GM18951 (cell line): ENCODE measurements at regions of chr3 and their contacts with region 1.

Region 1: DNA sequence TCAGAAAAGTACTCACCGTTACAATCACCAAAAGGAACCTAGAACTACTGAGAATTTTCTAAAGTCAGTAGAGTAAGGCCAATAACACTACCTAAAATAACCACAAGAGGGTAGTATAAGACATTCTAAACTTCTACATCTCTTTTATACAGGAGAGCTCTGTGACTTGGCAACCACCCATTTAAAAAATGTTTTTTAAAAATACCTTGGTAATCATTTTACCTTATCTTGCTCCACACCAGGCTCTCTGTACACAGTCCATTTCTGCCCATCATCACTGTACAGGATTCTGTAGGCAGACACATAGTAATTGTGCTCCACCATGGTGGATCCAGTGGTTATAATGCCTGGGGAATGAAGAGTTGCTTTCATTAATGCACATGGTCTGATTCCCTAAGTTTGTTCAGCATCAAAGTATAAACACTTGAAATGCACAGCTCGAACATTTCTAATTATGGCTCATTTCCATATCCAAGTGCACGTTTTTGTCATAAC is 54.5 kb downstream of the ST3GAL6 start:
- POLR2A ChIP-seq: no peak

Region 2: DNA sequence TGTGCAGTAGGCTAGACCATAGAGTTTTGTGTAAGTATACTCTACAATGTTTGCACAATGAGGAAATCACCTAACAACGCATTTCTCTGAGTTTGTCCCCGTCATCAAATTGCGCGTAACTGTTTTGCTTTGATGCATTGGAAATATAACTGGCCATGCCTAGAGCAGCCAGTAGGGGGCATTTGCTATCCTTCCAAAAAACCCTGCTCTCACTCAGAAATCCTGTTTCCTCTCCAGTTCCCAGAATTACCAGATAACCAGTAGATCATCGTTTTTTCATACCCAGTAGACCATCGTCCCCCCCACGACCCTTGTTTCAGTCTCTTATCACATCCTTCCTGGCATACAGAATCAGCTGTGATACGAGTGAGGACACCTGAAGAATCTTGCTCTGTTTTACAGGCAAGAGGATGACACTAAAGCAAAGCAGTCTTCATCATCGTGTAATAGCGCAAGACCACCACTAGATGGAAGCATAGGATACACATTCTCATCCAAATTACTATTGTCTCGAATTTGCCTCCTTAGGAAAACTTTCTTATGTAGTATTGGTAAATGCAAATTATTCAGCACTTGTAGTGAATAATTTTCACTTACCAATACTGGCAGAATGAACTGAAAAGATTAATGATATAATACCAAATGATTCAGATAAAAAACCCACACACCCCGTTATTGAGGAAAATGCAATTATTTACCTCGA is 778.1 kb before region 1 on chr3:
- in situ Hi-C with region 1: loop called (anchors 25 kb)
- POLR2A ChIP-seq: no peak

Region 3: GRCh38 chr3:98705706-98706105 is 111.9 kb before region 1 on chr3:
- in situ Hi-C with region 1: no loop called
- POLR2A ChIP-seq: no peak

Region 4: DNA sequence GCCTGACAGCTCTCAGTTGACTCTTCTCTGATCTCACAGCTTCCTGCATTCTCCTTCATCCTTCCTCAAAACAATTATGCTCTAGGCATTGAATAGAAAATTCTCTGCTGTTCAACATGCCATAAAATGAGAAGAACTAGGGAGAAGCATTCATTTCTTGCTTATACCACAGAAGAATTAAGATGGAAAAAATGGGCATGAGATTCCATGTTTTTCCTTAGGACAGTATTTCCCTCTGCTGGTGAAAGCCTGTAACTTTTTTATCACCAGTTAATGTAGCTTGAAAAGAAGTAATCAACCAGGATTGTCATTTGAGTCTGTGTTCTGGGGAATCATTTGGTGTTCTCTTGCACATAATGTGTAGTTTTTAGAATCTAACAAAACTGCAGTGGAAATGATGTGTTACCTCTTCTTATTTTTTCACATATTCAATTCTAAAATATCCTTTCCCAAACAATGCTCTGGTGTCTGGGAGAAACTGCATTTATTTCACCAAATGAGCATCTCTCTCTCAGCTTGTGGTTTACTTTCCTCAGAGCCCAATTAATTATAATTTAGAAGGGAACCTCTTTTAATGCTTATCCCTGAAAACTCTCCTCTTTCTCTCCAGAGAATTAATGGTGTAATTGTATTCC is 176.7 kb after region 1 on chr3:
- in situ Hi-C with region 1: loop called (anchors 10 kb)
- POLR2A ChIP-seq: no peak

Region 5: DNA sequence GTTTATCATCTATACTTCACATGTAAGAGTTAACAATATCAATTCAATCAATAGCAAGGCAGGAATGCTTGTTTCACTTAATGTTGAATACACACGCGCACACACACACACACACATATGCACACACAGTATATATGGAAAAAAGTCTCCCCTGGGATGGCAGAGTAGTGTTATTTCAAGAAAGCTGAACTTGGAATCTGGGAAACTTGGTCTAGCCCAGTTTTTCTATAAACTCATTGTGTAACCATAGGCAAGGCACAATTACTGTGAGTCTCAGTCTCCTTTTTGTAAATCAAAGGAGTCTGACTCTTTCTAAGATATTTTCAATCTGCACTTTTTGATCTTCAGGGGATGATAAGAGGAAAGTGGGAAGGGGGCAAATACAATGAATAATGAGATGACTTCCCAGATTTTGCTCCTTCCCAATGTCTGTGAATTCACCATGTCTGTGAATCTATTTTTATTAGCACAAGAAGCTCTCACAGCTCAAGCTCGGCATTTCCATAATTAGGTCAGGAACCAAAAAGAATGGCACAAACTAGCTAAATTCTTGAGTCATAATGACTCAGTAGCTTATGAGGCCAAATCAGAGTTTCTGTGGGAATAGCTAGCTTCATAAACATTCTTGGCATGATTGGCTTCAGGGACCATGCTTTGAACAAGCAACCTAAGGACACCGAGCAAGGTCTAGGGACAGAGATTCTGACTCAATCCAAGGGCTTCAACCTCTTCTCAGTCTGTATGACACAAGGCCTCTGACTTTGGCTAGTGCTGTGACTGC is 311.3 kb after region 1 on chr3:
- in situ Hi-C with region 1: no loop called
- POLR2A ChIP-seq: no peak

Region 6: DNA sequence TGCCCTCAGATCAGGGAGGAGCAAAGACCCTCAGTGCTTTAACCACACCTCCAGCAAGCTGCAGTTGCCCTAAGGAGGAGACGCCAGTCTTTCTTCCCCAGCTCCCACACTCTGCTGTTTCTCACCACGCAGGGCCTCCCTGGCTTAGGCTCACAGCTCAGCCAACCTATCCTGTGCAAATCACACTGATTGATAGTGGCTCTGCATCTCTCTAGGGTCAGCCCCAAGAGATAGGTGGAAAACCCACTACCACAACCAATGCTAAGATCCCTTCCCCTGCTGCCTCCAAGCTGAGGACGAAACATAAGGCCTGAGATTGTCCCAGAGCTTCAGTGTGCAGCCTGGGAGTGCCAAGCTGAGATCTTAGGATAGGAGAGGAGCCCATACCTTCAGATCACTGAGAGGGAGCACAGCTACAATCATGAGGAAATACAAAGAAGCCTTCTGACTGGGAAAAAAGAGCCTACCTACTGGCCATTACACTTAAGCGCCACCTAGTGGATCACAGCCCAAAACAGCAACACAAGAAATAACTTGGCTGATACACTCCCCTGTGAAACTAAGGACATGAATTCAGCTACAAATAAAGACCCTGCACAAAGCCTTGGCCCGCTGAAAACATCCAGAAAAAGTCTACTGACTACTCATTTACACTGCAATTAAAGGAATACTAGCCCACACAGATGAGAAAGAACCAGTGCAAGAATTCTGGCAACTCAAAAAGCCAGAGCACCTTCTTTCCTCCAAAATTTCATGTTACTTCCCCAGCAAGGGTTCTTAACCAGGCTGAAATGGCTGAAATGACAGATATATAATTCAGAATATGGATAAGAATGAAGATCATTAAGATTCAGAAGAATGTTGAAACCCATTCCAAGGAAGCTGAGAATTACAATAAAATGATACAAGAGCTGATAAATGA is 355.4 kb after region 1 on chr3:
- in situ Hi-C with region 1: loop called (anchors 10 kb)
- POLR2A ChIP-seq: no peak

Region 7: DNA sequence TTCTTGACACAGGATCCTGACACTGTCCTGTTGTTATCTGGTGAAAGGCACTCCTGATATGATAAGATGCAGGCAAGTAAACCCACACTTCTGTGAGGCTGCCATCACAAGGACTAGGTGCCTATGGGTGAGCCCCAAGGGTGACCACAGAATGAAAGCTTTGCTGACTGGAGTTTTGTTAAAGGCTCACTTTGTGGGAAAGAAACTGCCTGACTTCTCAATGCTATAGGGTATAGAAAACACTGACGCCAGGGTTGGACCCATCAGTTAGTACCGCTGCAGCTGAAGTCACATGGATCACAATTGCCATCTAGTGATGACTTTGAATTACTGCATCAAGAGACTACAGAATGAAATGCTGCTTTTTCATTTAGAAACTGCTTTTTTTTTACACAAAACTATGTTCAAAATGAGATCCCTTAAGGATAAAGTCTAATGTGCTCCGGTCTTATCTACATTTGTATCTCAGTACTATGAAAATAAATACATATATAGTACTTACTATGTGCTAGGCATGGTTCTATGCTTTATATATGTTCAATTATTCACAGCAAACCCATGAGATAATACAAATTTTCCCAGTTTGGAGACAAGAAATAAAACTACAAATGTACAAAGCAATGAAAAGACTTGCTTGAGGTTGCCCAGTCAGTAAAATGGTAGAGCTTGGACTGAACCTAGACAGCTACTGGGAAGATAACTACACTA is 935.8 kb after region 1 on chr3:
- in situ Hi-C with region 1: loop called (anchors 25 kb)
- POLR2A ChIP-seq: no peak